ENCODE measurements at regions of chr13 and their contacts with region 1.

Region 1: GRCh38 chr13:51803422-51804294 is at the start of gene DHRS12:
- DNase-seq: peak; percentile 75 to 97 (median 88)
- ATAC-seq: peak; percentile 71
- H3K4me3 ChIP-seq: peak within 1 kb of the TSS; percentile 77 to 79
- H3K4me3 Mint-ChIP-seq: peak within 1 kb of the TSS; percentile 92
- H3K27ac ChIP-seq: peak within 1 kb of the TSS; percentile 97 to 99
- H3K27ac Mint-ChIP-seq: peak within 1 kb of the TSS; percentile 100
- H3K4me1 ChIP-seq: peaks cover 39% of the 10 kb centered on the region
- H3K4me1 Mint-ChIP-seq: peaks cover 55% of the 10 kb centered on the region
- H3K27me3 ChIP-seq: no peaks in the 10 kb centered on the region
- H3K27me3 Mint-ChIP-seq: no peaks in the 10 kb centered on the region
- CTCF ChIP-seq: no peak
- total RNA-seq, gene DHRS12: 13.4 to 14.1 TPM

Region 2: GRCh38 chr13:50123862-50124536 is 1679.7 kb before region 1 on chr13:
- CTCF ChIA-PET with region 1: no interaction called
- POLR2A ChIA-PET with region 1: no interaction called
- intact Hi-C with region 1: loop called (anchors 10 kb)
- DNase-seq: peak in 8 of 9 experiments; percentile 43 to 91 (median 72)
- ATAC-seq: peak; percentile 65
- H3K4me3 ChIP-seq: peak overlapping the region; percentile 87 to 93
- H3K4me3 Mint-ChIP-seq: peak overlapping the region; percentile 90
- H3K27ac ChIP-seq: peak overlapping the region; percentile 90 to 92
- H3K27ac Mint-ChIP-seq: peak overlapping the region; percentile 96
- H3K4me1 ChIP-seq: peaks cover 24% of the 10 kb centered on the region
- H3K4me1 Mint-ChIP-seq: peaks cover 44% of the 10 kb centered on the region
- H3K27me3 ChIP-seq: peaks cover 12 to 19% of the 10 kb centered on the region in 2 experiments
- H3K27me3 Mint-ChIP-seq: peaks cover 15% of the 10 kb centered on the region
- CTCF ChIP-seq: no peak

Region 3: GRCh38 chr13:50401049-50401505 is 1402.6 kb before region 1 on chr13:
- CTCF ChIA-PET with region 1: no interaction called
- POLR2A ChIA-PET with region 1: no interaction called
- intact Hi-C with region 1: no loop called
- DNase-seq: no peak
- ATAC-seq: no peak
- H3K4me3 ChIP-seq: no peak overlapping the region
- H3K4me3 Mint-ChIP-seq: no peak overlapping the region
- H3K27ac ChIP-seq: no peak overlapping the region
- H3K27ac Mint-ChIP-seq: no peak overlapping the region
- H3K4me1 ChIP-seq: no peaks in the 10 kb centered on the region
- H3K4me1 Mint-ChIP-seq: no peaks in the 10 kb centered on the region
- H3K27me3 ChIP-seq: no peaks in the 10 kb centered on the region
- H3K27me3 Mint-ChIP-seq: no peaks in the 10 kb centered on the region
- CTCF ChIP-seq: no peak

Region 4: DNA sequence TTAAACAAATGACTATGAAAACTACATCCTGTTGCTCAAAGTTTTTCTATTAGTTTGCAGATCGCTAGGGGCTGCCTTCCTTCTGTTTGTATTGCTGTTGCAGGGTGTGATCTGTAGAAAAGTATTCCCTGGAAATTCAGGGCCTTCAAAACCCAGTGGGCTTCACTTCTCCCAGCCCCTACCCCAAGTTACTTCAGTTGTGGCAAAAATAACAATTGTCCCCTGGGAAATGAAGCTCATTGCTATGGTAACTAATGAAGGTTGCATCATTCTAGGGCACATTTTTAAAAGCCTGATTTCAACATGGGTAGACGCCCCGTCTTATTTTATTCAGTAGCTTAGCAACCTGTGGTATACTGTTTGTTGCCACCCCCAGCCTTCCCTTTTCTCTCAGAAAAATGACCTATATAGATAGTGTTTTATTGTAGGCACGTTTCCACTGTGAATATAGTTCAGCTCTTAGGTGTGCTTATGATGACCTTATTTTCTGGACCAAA is 158.5 kb before region 1 on chr13:
- CTCF ChIA-PET with region 1: no interaction called
- POLR2A ChIA-PET with region 1: interaction called, 3 read pairs
- intact Hi-C with region 1: loop called (anchors 2 to 5 kb)
- DNase-seq: peak in 4 of 9 experiments; percentile 37 to 80 (median 62)
- ATAC-seq: peak; percentile 81
- H3K4me3 ChIP-seq: no peak overlapping the region
- H3K4me3 Mint-ChIP-seq: peak overlapping the region; percentile 52
- H3K27ac ChIP-seq: peak overlapping the region; percentile 66 to 71
- H3K27ac Mint-ChIP-seq: peak overlapping the region; percentile 96
- H3K4me1 ChIP-seq: peaks cover 44% of the 10 kb centered on the region
- H3K4me1 Mint-ChIP-seq: peaks cover 50% of the 10 kb centered on the region
- H3K27me3 ChIP-seq: no peaks in the 10 kb centered on the region
- H3K27me3 Mint-ChIP-seq: no peaks in the 10 kb centered on the region
- CTCF ChIP-seq: no peak

Region 5: DNA sequence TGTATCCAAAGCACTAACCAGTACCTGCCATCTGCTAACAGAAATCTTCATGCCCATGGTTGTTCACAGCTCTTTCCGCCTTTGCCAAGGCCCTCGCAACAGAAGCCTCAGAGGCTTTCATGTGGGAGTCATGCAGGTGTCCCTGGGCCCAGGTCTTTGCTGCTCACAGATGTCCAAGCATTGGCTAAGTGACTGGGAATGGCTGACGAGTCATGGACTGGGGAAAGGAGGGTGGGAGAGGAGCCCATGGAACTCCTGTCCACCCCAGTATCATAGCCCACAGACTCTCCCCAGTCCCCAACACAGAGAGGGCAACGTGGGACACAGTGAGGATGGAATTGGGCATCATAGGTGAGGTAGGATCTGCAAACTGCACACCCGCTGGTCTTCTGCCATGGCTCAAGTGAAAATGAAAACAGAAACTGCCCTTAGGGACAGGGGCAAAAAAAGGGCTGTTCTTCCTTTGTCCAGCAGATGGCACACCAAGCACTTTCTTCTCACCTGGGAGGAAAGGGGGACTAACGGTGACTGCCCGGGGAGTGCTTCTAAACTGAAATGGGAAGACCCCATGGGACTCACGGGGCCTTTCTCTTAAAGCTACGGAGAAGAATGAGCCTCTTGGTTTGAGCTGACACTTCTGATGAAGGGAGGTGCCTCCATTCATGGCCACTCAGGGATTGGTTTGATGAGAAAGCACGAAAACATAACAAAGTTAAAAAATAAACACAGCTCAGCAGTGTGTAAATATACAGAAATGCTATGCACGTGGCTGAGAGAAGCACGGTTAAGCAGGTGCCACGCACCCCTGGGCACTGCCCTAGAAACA is 11.4 kb after region 1 on chr13:
- CTCF ChIA-PET with region 1: interaction called, 25 read pairs
- POLR2A ChIA-PET with region 1: interaction called, 143 read pairs
- intact Hi-C with region 1: loop called in 1 of 2 experiments (anchors 1 kb)
- DNase-seq: peak; percentile 49 to 89 (median 76)
- ATAC-seq: peak; percentile 82
- H3K4me3 ChIP-seq: peak overlapping the region; percentile 12 to 23
- H3K4me3 Mint-ChIP-seq: peak overlapping the region; percentile 70
- H3K27ac ChIP-seq: peak overlapping the region in 1 of 2 experiments; percentile 18
- H3K27ac Mint-ChIP-seq: peak overlapping the region; percentile 92
- H3K4me1 ChIP-seq: peaks cover 63% of the 10 kb centered on the region
- H3K4me1 Mint-ChIP-seq: peaks cover 79% of the 10 kb centered on the region
- H3K27me3 ChIP-seq: no peaks in the 10 kb centered on the region
- H3K27me3 Mint-ChIP-seq: no peaks in the 10 kb centered on the region
- CTCF ChIP-seq: peak; percentile 92

Region 6: GRCh38 chr13:51832471-51833152 is 29.0 kb after region 1 on chr13:
- CTCF ChIA-PET with region 1: interaction called, 74 read pairs
- POLR2A ChIA-PET with region 1: interaction called, 143 read pairs
- intact Hi-C with region 1: loop called in 1 of 2 experiments (anchors 1 kb)
- DNase-seq: peak; percentile 35 to 83 (median 64)
- ATAC-seq: peak; percentile 98
- H3K4me3 ChIP-seq: no peak overlapping the region
- H3K4me3 Mint-ChIP-seq: peak overlapping the region; percentile 36
- H3K27ac ChIP-seq: no peak overlapping the region
- H3K27ac Mint-ChIP-seq: peak overlapping the region; percentile 28
- H3K4me1 ChIP-seq: peaks cover 48% of the 10 kb centered on the region
- H3K4me1 Mint-ChIP-seq: peaks cover 60% of the 10 kb centered on the region
- H3K27me3 ChIP-seq: no peaks in the 10 kb centered on the region
- H3K27me3 Mint-ChIP-seq: no peaks in the 10 kb centered on the region
- CTCF ChIP-seq: peak; percentile 62

Region 7: DNA sequence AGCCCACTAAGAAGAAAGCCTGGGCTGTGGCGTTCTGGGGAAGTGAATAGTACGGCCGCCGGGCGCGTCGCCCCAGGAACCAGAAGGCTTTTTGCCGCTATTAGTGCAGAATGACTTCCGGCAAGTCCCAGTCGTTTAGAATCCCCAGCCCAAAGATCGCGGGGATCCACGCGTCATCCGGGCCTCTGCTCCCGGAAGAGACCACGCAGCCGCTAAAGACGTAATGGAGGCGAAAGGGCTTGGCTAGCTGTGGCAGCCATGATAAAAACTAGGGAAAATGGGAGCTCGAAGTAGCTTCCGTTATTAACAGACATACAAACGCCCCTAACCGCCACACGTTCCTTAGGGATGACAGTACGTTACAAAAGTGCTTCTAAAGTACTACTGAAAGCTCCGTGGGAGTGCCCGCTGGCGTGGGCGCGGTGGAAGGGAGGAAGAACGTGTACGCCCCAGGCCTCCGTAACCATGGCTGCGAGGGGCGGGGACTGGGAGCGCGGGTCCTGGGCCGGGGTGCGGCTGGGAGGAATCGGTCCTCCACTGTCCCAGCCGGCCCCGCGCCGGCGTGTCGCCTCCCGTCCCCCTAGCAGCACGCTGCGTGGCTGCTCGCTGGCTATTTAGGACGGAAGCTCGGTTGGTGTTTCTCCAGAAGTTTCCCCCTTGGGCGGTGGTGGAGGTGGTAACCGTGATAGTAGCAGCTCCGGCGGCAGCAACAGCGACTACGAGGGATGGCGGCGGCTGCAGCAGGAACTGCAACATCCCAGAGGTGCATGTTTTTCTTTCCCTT is 848.7 kb after region 1 on chr13 and contains the start of gene SUGT1:
- CTCF ChIA-PET with region 1: no interaction called
- POLR2A ChIA-PET with region 1: no interaction called
- intact Hi-C with region 1: loop called (anchors 1 to 5 kb)
- DNase-seq: peak; percentile 88 to 98 (median 95)
- ATAC-seq: peak; percentile 92
- H3K4me3 ChIP-seq: peak within 1 kb of the TSS; percentile 70 to 87
- H3K4me3 Mint-ChIP-seq: no peak within 1 kb of the TSS
- H3K27ac ChIP-seq: peak within 1 kb of the TSS; percentile 94 to 96
- H3K27ac Mint-ChIP-seq: no peak within 1 kb of the TSS
- H3K4me1 ChIP-seq: peaks cover 32% of the 10 kb centered on the region
- H3K4me1 Mint-ChIP-seq: peaks cover 7% of the 10 kb centered on the region
- H3K27me3 ChIP-seq: no peaks in the 10 kb centered on the region
- H3K27me3 Mint-ChIP-seq: no peaks in the 10 kb centered on the region
- CTCF ChIP-seq: peak; percentile 68
- total RNA-seq, gene SUGT1: 17.8 to 20.0 TPM